Aorta (tissue), 5 donors: ENCODE measurements at regions of chr11 and their contacts with region 1.

Region 1: GRCh38 chr11:117843666-117844484 is 19.3 kb upstream of the FXYD2 start:
- DNase-seq: peak; percentile 87 to 94
- ATAC-seq: peak; percentile 86
- H3K4me3 ChIP-seq: no peak overlapping the region
- H3K27ac ChIP-seq: no peak overlapping the region
- H3K4me1 ChIP-seq: no peaks in the 10 kb centered on the region
- H3K27me3 ChIP-seq: no peaks in the 10 kb centered on the region

Region 2: DNA sequence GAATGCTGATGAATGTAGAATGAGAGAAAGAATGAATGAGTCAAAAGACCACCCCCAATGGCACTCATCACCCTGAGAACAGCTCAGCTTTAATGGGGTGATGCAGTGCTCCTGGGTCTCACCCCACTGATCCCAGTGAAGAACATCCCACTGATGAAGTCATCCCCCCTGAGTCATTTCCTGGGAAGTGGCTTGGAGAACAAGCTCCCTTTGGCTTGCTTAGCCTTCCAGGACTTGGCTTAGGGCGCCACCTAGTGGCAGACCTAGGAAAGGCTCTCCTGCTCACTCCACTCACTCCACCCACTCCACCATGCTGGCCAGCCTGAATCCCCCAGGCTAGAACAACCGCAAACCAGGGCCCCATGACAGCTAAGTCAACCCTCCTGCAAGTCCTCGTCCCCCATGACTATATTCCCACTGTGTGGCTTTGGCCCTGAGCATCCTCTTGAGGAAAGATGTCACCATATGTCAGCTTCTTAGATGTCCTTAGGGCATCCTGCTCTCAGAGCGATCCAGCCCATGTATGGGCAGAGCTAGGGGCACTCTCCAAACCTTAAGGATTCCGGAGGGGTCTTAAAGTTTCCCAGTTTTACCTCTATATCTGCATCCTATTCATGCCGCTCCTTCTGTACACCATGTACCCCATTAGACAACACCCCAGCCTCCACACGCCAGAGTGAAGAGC is 103.1 kb after region 1 on chr11:
- intact Hi-C with region 1: loop called (anchors 1 to 2 kb)
- DNase-seq: peak; percentile 91 to 95
- ATAC-seq: peak; percentile 93
- H3K4me3 ChIP-seq: no peak overlapping the region
- H3K27ac ChIP-seq: no peak overlapping the region
- H3K4me1 ChIP-seq: no peaks in the 10 kb centered on the region
- H3K27me3 ChIP-seq: no peaks in the 10 kb centered on the region

Region 3: DNA sequence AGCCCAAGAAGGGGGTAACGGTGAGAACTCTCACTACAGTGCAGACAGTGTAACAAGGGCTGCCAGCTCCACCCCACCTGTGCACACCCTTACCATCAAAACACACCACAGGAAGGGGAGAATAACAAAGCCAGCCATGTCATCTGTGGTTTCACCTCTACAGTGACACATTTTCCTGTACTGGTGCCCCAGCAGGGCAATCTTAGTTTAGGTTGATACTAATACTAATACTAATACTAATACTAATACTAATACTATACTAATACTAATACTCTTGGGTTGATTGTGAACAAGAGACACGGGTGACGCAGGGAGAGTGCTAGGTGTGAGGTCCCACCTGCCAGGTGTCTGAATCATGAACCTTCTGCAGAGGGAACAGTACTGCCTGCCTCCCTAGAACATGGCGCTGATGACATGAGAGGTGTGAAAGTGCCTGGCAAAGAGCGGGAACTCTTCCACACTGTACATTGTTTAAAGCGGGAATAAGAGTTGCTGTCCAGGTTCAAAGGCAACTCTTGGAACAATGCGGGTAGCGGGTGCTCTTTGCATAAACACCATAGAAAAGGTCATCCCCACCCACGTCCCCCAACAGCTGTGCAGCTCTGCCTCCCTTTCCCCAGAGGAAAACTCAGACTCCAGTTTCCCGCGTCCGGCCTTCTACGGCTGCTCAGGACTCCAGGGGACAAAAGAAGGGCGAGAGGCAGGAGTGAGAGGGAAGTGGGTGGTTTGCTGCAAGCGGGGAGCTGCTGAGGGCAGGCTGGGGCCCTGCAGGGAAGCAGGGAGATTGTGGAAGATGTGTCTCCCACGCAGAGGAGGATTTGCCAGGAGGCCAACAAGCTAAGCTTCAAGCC is 208.0 kb after region 1 on chr11:
- intact Hi-C with region 1: loop called (anchors 2 kb)
- DNase-seq: no peak
- ATAC-seq: no peak
- H3K4me3 ChIP-seq: no peak overlapping the region
- H3K27ac ChIP-seq: no peak overlapping the region
- H3K4me1 ChIP-seq: no peaks in the 10 kb centered on the region
- H3K27me3 ChIP-seq: no peaks in the 10 kb centered on the region